B cell (primary cell): ENCODE measurements at regions of chr7 and their contacts with region 1.

Region 1: DNA sequence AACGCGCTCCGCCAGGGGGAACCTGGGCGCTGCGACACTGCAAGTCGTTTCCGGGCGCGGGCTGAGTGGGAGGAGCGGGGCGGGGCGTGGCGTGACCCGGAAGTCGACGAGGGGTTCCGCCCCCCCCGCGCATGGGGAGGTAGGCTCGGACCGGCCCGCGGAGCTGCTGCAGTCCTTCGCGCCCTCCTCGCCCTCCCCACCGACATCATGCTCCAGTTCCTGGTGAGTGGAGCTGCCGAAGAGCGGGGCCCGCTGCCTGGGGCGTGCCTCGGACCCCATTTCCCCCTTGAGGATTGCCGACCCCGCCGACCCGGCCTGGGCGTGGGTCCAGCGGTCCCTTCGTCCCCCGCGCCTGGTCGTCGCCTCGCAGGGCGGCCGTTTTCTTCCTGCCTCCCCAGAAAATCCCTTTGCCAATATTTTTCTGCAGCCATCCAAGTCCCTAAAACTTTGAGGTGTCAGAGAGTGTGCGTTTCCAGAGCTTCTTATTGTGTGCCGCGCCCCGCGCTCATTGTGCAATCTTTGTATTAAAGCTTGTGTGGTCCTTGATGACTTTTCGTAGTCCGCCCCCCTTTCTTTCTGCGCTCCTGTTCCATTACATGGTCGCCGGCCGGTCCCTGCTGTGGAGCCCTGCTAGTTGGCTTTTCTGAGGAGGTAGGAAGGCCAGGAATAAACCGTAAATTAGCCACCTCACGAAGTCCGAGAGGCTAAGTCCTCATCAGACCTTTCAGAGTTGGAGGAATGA is at the start of gene STMP1:
- DNase-seq: peak; percentile 95
- ATAC-seq: peak; percentile 99
- H3K4me3 ChIP-seq: peak within 1 kb of the TSS; percentile 88 to 99 (median 97)
- H3K4me3 Mint-ChIP-seq: peak within 1 kb of the TSS; percentile 91
- H3K27ac ChIP-seq: peak within 1 kb of the TSS; percentile 56 to 77
- H3K27ac Mint-ChIP-seq: peak within 1 kb of the TSS; percentile 81
- H3K4me1 ChIP-seq: peaks cover 15 to 32% of the 10 kb centered on the region in 2 donors
- H3K4me1 Mint-ChIP-seq: peaks cover 32% of the 10 kb centered on the region
- H3K27me3 ChIP-seq: no peaks in the 10 kb centered on the region
- H3K27me3 Mint-ChIP-seq: no peaks in the 10 kb centered on the region
- CTCF ChIP-seq: peak; percentile 75
- total RNA-seq, gene STMP1: 30.3 and 33.5 TPM in 2 replicates

Region 2: DNA sequence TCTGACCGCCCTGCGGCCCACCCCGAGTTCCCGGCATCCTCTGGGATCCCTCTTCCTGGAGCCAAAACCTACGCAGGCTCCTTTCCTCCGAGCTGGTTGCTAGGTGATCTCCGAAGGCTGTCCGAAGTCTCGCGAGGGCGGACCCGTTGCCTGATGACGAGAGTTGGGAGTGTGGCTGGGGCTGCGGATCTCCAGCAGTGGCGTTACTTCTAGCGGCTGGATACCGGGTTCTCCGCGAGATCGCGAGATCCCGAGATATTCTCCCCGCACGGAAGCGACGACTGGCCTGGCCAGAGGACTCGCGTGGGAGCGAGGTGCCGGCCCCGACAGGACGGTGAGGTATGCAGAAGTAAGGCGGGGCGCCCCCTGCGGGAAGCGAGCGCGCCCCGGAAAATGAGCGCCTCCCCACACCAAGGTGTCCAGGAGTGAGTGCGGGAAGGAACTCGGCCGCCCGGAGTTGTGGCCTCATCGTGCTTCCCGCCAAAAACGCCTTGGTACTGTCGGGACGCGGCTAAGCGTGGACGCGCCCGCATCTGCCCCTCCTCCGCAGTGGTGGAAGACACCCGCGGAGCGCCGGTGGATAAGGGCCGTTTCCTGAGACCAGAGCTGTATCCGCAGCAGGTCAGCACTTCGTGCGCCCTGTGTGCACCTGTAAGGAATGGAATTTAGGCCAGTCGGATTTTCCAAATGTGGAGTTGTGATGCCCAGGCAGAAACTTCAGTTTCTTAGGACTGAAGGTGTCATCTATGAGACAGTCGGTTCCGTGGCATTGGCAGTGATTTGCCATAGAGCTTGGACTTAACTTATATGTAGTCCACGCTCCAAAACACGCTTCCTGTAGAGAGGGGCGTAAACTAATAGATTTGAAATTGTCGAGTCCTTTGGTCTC is 675.9 kb before region 1 on chr7 and contains the start of gene AGBL3:
- CTCF ChIA-PET with region 1: no interaction called
- POLR2A ChIA-PET with region 1: no interaction called
- intact Hi-C with region 1: loop called (anchors 2 kb)
- DNase-seq: peak; percentile 95
- ATAC-seq: peak; percentile 86
- H3K4me3 ChIP-seq: peak within 1 kb of the TSS; percentile 69 to 97 (median 94)
- H3K4me3 Mint-ChIP-seq: peak within 1 kb of the TSS; percentile 98
- H3K27ac ChIP-seq: peak within 1 kb of the TSS; percentile 88 to 93
- H3K27ac Mint-ChIP-seq: peak within 1 kb of the TSS; percentile 98
- H3K4me1 ChIP-seq: peaks cover 4 to 5% of the 10 kb centered on the region in 2 donors
- H3K4me1 Mint-ChIP-seq: peaks cover 34% of the 10 kb centered on the region
- H3K27me3 ChIP-seq: no peaks in the 10 kb centered on the region
- H3K27me3 Mint-ChIP-seq: no peaks in the 10 kb centered on the region
- CTCF ChIP-seq: peak; percentile 92
- total RNA-seq, gene AGBL3: 10.9 and 11.1 TPM in 2 replicates

Region 3: GRCh38 chr7:135281363-135281949 is 381.1 kb before region 1 on chr7:
- CTCF ChIA-PET with region 1: no interaction called
- POLR2A ChIA-PET with region 1: no interaction called
- intact Hi-C with region 1: loop called (anchors 5 kb)
- DNase-seq: peak; percentile 85
- ATAC-seq: peak; percentile 100
- H3K4me3 ChIP-seq: no peak overlapping the region
- H3K4me3 Mint-ChIP-seq: no peak overlapping the region
- H3K27ac ChIP-seq: no peak overlapping the region
- H3K27ac Mint-ChIP-seq: no peak overlapping the region
- H3K4me1 ChIP-seq: peaks cover 4% of the 10 kb centered on the region in 2 donors
- H3K4me1 Mint-ChIP-seq: peaks cover 8% of the 10 kb centered on the region
- H3K27me3 ChIP-seq: peaks cover 0 to 4% (median 0%) of the 10 kb centered on the region in 4 experiments
- H3K27me3 Mint-ChIP-seq: peaks cover 13% of the 10 kb centered on the region
- CTCF ChIP-seq: peak; percentile 98

Region 4: DNA sequence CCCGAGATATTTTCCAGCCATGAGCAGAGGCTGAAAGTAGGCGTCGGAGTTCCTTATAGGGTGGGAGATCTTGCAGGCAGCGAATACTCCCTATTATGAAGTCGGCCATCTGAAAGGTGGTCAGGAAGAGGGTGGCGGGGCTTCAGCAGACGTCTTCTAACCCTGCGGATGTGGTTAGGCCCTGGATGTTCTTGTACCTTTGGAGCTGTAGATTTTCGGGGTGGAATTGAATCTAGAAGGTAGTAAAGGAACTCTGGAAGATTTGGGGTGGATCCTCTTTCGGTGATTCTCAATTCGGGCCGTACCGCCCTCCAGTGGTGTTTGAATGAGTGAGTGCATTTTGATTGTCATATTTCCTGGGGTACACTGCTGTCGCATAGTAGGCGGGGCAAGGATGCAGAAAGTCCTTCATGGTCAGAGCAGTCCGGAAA is 104.2 kb before region 1 on chr7:
- CTCF ChIA-PET with region 1: interaction called, 3 read pairs
- POLR2A ChIA-PET with region 1: no interaction called
- intact Hi-C with region 1: loop called (anchors 1 kb)
- DNase-seq: peak; percentile 83
- ATAC-seq: peak; percentile 63
- H3K4me3 ChIP-seq: peak overlapping the region; percentile 77 to 100 (median 97)
- H3K4me3 Mint-ChIP-seq: no peak overlapping the region
- H3K27ac ChIP-seq: peak overlapping the region; percentile 95 to 98
- H3K27ac Mint-ChIP-seq: no peak overlapping the region
- H3K4me1 ChIP-seq: peaks cover 3 to 6% of the 10 kb centered on the region in 2 donors
- H3K4me1 Mint-ChIP-seq: peaks cover 14% of the 10 kb centered on the region
- H3K27me3 ChIP-seq: no peaks in the 10 kb centered on the region
- H3K27me3 Mint-ChIP-seq: peaks cover 5% of the 10 kb centered on the region
- CTCF ChIP-seq: peak; percentile 70

Region 5: GRCh38 chr7:135672560-135673359 is 10.2 kb after region 1 on chr7:
- CTCF ChIA-PET with region 1: interaction called, 12 read pairs
- POLR2A ChIA-PET with region 1: no interaction called
- intact Hi-C with region 1: no loop called
- DNase-seq: peak; percentile 34
- ATAC-seq: no peak
- H3K4me3 ChIP-seq: no peak overlapping the region
- H3K4me3 Mint-ChIP-seq: no peak overlapping the region
- H3K27ac ChIP-seq: no peak overlapping the region
- H3K27ac Mint-ChIP-seq: no peak overlapping the region
- H3K4me1 ChIP-seq: no peaks in the 10 kb centered on the region
- H3K4me1 Mint-ChIP-seq: peaks cover 21% of the 10 kb centered on the region
- H3K27me3 ChIP-seq: no peaks in the 10 kb centered on the region
- H3K27me3 Mint-ChIP-seq: no peaks in the 10 kb centered on the region
- CTCF ChIP-seq: peak; percentile 72

Region 6: DNA sequence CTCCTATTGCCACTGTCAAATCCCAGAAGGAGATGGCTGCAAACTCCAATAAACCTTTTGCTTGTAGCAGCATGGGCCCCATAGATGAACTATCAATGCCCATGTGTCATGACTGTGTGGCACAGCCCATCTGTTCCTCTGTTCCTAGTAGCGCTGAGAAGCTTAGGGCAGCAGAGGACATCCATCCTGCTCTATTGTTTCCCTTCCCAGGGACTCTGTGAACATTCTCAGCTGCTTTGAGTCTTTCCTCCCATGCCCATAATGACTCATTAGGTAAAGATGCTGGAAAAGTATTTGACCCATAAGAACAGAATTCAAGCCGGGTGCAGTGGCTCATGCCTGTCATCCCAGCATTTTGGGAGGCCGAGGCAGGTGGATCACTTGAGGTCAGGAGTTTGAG is 28.0 kb after region 1 on chr7:
- CTCF ChIA-PET with region 1: no interaction called
- POLR2A ChIA-PET with region 1: no interaction called
- intact Hi-C with region 1: no loop called
- DNase-seq: no peak
- ATAC-seq: no peak
- H3K4me3 ChIP-seq: no peak overlapping the region
- H3K4me3 Mint-ChIP-seq: no peak overlapping the region
- H3K27ac ChIP-seq: no peak overlapping the region
- H3K27ac Mint-ChIP-seq: no peak overlapping the region
- H3K4me1 ChIP-seq: no peaks in the 10 kb centered on the region
- H3K4me1 Mint-ChIP-seq: no peaks in the 10 kb centered on the region
- H3K27me3 ChIP-seq: no peaks in the 10 kb centered on the region
- H3K27me3 Mint-ChIP-seq: no peaks in the 10 kb centered on the region
- CTCF ChIP-seq: no peak

Region 7: DNA sequence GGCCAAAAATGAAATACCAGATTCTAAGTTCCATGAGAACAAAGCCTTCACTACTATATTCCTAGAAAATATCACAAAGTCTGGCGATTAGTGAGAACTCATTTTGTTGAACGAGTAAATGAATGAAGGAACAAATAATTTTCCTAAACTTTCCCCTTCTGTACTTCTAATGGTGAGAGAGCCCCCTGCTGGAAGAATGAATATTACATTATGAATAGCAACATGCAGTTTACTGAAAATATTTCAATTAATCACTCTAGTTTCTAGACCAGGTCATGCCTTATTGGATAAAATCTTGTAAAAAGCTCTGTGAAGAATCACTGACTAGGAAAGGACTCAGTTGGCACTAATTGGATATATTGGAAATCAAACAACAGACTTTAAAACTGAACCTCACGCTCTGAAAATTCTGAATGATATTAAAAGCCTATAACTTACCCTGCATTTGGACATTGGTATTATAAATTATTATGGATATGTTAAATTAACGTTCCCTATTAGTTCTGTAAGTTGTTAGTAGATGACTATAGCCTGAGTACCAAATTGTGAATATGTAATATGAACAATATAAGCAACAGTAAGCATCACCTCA is 347.0 kb after region 1 on chr7:
- CTCF ChIA-PET with region 1: interaction called, 4 read pairs
- POLR2A ChIA-PET with region 1: no interaction called
- intact Hi-C with region 1: loop called (anchors 5 kb)
- DNase-seq: peak; percentile 70
- ATAC-seq: peak; percentile 41
- H3K4me3 ChIP-seq: no peak overlapping the region
- H3K4me3 Mint-ChIP-seq: no peak overlapping the region
- H3K27ac ChIP-seq: no peak overlapping the region
- H3K27ac Mint-ChIP-seq: no peak overlapping the region
- H3K4me1 ChIP-seq: peaks cover 0 to 5% of the 10 kb centered on the region in 2 donors
- H3K4me1 Mint-ChIP-seq: peaks cover 7% of the 10 kb centered on the region
- H3K27me3 ChIP-seq: no peaks in the 10 kb centered on the region
- H3K27me3 Mint-ChIP-seq: peaks cover 4% of the 10 kb centered on the region
- CTCF ChIP-seq: peak; percentile 91